ENCODE measurements at regions of chr20 and their contacts with region 1.

Region 1: DNA sequence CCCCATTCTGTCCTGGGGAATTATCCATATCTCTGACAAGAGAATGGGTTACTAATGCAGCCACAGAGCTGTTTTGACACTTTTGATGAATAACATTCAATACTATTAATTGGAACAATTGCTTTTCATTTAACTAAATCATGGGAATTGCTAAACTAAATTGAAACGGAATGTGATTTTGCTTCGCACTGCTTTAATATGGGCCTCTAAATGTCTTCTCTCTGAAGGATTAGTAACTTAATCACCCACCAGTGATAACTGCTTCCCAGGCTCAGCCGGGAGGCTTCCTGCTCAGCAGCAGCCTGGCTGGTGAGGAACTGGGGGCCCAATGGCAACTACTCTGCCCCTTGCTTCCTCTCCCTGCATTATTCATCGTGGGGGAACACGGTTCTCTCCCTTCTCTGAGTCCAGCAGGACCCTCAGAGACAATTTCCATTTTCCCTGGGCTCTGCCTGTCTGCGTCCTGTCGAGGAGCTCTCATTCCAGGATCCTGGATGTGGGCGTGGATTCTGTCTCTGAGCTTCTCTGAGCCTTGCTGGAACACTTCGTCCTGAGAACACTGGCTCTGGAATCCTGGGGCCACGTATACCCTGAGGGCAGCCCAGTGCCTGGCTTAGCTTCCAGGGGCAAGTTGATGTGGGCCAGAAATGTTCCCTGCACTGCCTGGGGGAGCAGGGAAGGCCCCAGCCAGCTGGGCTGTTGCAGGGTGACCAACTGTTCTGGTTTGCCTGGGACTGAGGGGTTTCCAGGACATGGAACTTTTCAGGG is 308.9 kb downstream of the DHX35 start:
- DNase-seq: no peak
- H3K4me3 ChIP-seq: no peak overlapping the region
- H3K27ac ChIP-seq: no peak overlapping the region
- H3K4me1 ChIP-seq: peaks cover 0 to 11% (median 0%) of the 10 kb centered on the region in 6 donors
- H3K27me3 ChIP-seq: no peaks in the 10 kb centered on the region
- CTCF ChIP-seq: no peak
- POLR2A ChIP-seq: no peak

Region 2: GRCh38 chr20:38825901-38826625 is 445.0 kb before region 1 on chr20:
- intact Hi-C with region 1: no loop called
- DNase-seq: no peak
- H3K4me3 ChIP-seq: no peak overlapping the region
- H3K27ac ChIP-seq: peak overlapping the region in 2 of 8 donors; percentile 16 to 32
- H3K4me1 ChIP-seq: peaks cover 13 to 91% (median 52%) of the 10 kb centered on the region in 6 donors
- H3K27me3 ChIP-seq: no peaks in the 10 kb centered on the region
- CTCF ChIP-seq: no peak
- POLR2A ChIP-seq: no peak

Region 3: GRCh38 chr20:38875175-38875993 is 395.6 kb before region 1 on chr20:
- intact Hi-C with region 1: no loop called
- DNase-seq: peak; percentile 91
- H3K4me3 ChIP-seq: peak overlapping the region in 7 of 8 donors; percentile 0 to 58 (median 19)
- H3K27ac ChIP-seq: peak overlapping the region; percentile 72 to 93 (median 87)
- H3K4me1 ChIP-seq: peaks cover 63 to 100% (median 98%) of the 10 kb centered on the region in 6 donors
- H3K27me3 ChIP-seq: no peaks in the 10 kb centered on the region
- CTCF ChIP-seq: no peak
- POLR2A ChIP-seq: no peak

Region 4: DNA sequence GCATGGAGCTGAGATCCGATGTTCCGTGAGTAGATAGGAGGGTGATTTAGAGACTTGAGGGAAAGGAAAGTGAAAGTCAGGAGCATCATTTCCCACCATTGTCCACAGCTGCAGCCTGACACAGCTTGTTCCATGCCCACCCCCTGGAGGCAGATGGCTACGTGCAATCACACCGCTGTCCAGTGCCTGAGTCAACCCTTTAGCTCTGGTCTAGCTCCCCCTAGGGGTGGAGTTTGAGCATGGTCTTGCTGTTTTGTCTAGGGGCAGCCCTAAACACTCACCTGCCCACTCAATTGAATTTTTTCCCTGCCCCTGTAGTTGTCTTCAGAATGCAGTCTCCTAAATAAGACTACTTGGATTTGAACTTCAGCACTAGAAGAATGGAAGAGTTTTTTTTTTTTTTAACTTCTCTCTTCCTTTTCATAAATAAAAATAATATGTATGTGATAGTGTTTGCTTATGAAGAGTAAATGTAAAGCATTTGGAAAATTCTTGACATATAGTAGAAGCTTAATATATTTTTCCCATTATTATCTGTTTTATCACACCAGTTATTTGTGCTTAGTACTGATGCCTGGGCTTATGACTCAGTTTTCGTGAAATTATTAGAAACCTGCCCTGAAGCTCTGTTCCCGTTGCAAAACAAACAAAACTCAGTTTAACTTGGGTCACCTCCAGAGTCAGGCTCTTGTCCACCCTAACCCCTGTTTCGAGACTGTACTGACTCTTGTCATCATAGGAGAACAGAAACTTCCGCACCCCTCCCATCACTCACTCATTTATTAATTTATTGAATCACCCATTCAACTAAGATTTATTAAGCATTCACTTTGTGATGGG is 603.2 kb after region 1 on chr20:
- intact Hi-C with region 1: loop called (anchors 5 kb)
- DNase-seq: peak; percentile 80
- H3K4me3 ChIP-seq: peak overlapping the region in 1 of 8 donors; percentile 34
- H3K27ac ChIP-seq: no peak overlapping the region
- H3K4me1 ChIP-seq: peaks cover 0 to 10% (median 7%) of the 10 kb centered on the region in 6 donors
- H3K27me3 ChIP-seq: peaks cover 0 to 8% (median 0%) of the 10 kb centered on the region in 7 donors
- CTCF ChIP-seq: peak; percentile 34 to 81 (median 69)
- POLR2A ChIP-seq: no peak

Region 5: DNA sequence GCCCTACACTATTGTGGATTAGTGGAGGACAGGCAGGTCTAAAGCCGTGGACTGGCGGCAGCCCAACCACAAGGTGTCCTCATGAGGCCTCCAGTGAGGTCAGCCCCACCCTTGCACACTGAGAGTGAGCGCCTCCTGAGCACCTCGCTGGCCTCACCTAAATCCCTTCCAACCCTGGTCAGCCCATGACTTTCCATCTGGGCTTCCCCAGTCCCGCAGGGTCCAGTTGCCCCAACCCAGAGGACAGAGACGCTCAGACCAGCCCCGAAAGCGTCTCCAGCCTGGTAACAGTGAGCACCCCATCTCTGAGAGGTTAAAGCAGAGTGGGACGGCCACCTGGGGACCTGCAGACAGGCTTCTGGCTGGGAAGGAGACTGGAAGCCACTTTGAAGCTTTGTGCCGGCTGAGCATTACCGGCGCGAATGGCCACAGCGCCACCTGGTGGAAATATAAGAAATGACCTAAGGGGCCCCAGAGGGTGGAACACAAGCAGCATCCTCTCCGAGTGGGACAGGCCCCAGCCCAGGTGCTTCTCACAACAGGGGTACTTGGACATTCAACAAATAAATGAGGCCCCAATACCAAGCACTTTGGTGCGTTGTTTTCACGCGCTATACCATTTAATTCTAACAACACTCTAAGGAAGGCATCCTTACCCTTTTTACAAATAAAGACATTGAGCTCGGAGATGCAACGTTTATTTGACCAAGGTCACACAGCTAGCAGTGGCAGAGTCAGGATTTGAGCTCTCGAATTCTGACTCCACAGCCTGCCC is 1691.9 kb after region 1 on chr20:
- intact Hi-C with region 1: loop called (anchors 5 kb)
- DNase-seq: peak; percentile 91
- H3K4me3 ChIP-seq: no peak overlapping the region
- H3K27ac ChIP-seq: no peak overlapping the region
- H3K4me1 ChIP-seq: peaks cover 0 to 23% (median 11%) of the 10 kb centered on the region in 6 donors
- H3K27me3 ChIP-seq: peaks cover 0 to 10% (median 0%) of the 10 kb centered on the region in 7 donors
- CTCF ChIP-seq: peak; percentile 66 to 96 (median 87)
- POLR2A ChIP-seq: no peak